PC-9 (cell line): ENCODE measurements at regions of chr5 and their contacts with region 1.

Region 1: GRCh38 chr5:32709781-32710549 is 1.2 kb upstream of the NPR3 start:
- DNase-seq: peak; percentile 45 to 82
- H3K4me3 ChIP-seq: peak overlapping the region; percentile 72
- H3K27ac ChIP-seq: no peak overlapping the region
- H3K4me1 ChIP-seq: peaks cover 19% of the 10 kb centered on the region; the same call in 1 of the 2 replicates
- H3K27me3 ChIP-seq: peaks cover 18% of the 10 kb centered on the region
- CTCF ChIP-seq: peak; percentile 80

Region 2: DNA sequence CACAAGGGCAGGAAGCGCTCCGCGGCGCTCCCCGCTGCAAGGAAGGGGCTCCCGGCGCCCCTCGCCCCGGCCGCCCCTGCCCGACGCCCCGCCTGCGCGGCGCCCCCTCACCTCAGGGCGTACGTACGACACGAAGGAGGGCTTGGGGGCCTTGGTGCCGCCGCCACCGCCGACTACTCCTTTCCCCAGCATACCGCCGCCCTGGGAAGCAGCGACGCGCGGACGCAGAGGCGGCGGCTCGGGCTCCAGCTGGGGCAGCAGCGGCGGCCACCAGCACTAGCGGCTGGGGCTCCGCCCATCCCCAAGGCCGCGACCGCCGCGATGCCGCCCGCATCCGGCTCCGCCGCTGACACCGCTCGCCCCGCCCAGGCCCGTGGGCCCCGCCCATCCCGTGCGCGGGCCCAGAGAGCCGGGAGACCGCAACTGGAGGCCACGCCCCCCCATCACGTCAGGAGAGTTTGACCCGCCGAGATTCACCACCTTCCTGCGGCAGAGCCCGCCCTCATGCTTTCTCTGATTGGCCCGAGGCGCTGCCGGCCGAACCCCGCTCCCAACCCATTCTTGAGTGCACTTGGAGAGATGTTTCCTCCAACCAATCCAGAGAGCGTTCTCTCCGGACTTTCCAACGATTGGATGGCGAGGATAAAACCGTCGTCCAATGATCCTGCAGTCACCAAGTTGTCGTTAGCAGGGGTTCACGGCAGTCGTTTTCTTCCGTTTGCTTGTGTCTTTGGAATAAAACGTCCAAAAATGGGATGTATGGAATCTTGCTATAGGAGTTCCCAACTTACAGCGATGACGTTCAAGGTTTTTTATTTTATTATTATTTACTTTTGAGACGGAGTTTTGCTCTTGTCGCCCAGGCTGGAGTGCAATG is 397.1 kb before region 1 on chr5 and contains the start of gene MTMR12:
- CTCF ChIA-PET with region 1: no interaction called
- POLR2A ChIA-PET with region 1: no interaction called
- intact Hi-C with region 1: loop called (anchors 10 kb)
- DNase-seq: peak; percentile 99 to 100
- H3K4me3 ChIP-seq: peak within 1 kb of the TSS; percentile 91
- H3K27ac ChIP-seq: peak within 1 kb of the TSS; percentile 14
- H3K4me1 ChIP-seq: peaks cover 10% of the 10 kb centered on the region
- H3K27me3 ChIP-seq: no peaks in the 10 kb centered on the region
- CTCF ChIP-seq: no peak
- total RNA-seq, gene MTMR12: 44.5 and 47.5 TPM in 2 replicates

Region 3: GRCh38 chr5:32572778-32573480 is 137.0 kb before region 1 on chr5:
- CTCF ChIA-PET with region 1: no interaction called
- POLR2A ChIA-PET with region 1: no interaction called
- intact Hi-C with region 1: no loop called
- DNase-seq: no peak
- H3K4me3 ChIP-seq: no peak overlapping the region
- H3K27ac ChIP-seq: no peak overlapping the region
- H3K4me1 ChIP-seq: no peaks in the 10 kb centered on the region
- H3K27me3 ChIP-seq: peaks cover 13% of the 10 kb centered on the region; the same call in 1 of the 2 replicates
- CTCF ChIP-seq: no peak

Region 4: DNA sequence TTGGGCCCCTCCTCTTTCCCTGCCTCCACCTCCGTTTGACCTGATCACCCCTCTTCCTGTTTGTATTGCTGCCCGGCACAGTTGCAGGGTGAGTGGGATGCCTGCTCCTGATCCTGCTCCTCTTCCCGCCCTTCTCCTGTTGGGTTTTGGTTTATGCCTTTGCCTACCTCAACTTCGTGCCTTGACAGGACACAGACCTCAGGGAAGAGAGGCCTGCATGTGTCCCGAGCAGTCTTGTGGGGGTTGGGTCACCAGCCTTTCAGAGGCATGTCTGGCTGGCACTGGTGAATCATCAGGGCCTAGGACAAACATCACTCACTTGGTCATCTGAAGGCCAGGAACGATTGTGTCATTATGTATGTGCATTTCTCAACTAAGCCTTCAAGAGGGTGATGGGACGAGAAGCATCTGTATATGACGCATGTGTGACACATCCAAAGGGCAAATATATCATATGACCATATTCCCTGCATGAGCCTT is 58.0 kb after region 1 on chr5:
- CTCF ChIA-PET with region 1: no interaction called
- POLR2A ChIA-PET with region 1: no interaction called
- intact Hi-C with region 1: loop called (anchors 1 kb)
- DNase-seq: peak; percentile 89 to 97
- H3K4me3 ChIP-seq: peak overlapping the region; percentile 6; the same call in 1 of the 2 replicates
- H3K27ac ChIP-seq: peak overlapping the region; percentile 74
- H3K4me1 ChIP-seq: peaks cover 18% of the 10 kb centered on the region
- H3K27me3 ChIP-seq: no peaks in the 10 kb centered on the region
- CTCF ChIP-seq: no peak

Region 5: GRCh38 chr5:32852535-32852934 is 142.6 kb after region 1 on chr5:
- CTCF ChIA-PET with region 1: interaction called, 24 read pairs
- POLR2A ChIA-PET with region 1: no interaction called
- intact Hi-C with region 1: loop called (anchors 1 kb)
- DNase-seq: peak in 1 of 2 experiments; percentile 91
- H3K4me3 ChIP-seq: no peak overlapping the region
- H3K27ac ChIP-seq: no peak overlapping the region
- H3K4me1 ChIP-seq: peaks cover 6% of the 10 kb centered on the region; the same call in 1 of the 2 replicates
- H3K27me3 ChIP-seq: peaks cover 10% of the 10 kb centered on the region; the same call in 1 of the 2 replicates
- CTCF ChIP-seq: peak; percentile 66

Region 6: DNA sequence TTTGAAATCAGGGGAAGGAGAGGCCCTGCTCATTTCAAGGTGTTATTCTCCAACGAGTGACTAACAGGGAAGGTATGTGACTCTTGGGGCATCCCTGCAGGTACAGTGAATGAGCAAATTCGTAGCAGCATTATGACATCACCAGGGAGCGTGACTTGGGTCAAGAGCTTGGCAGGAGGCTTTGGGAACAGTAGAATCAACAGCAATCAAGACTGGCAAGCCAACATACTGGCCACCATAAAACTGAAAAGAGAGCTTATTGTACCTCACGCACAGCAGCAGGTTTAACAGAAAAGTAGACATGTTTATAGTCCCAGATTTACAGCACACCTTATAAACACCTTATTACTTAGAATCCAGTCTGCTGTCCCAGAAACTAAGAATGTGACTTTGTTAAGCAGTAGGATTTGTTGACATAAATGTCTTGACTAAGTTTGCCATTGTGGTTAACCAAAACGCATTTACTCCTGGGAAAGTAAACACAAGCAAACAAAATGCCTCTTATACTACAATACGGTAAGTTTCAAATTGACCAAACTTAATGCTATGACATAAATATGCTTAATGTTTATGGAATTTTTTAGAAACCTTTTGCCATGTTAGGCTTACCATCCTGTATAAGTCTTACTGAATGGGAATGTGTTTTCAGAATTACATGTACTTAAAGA is 298.9 kb after region 1 on chr5:
- CTCF ChIA-PET with region 1: no interaction called
- POLR2A ChIA-PET with region 1: no interaction called
- intact Hi-C with region 1: loop called (anchors 1 kb)
- DNase-seq: peak; percentile 73 to 92
- H3K4me3 ChIP-seq: no peak overlapping the region
- H3K27ac ChIP-seq: peak overlapping the region; percentile 48
- H3K4me1 ChIP-seq: peaks cover 14% of the 10 kb centered on the region
- H3K27me3 ChIP-seq: no peaks in the 10 kb centered on the region
- CTCF ChIP-seq: no peak

Region 7: DNA sequence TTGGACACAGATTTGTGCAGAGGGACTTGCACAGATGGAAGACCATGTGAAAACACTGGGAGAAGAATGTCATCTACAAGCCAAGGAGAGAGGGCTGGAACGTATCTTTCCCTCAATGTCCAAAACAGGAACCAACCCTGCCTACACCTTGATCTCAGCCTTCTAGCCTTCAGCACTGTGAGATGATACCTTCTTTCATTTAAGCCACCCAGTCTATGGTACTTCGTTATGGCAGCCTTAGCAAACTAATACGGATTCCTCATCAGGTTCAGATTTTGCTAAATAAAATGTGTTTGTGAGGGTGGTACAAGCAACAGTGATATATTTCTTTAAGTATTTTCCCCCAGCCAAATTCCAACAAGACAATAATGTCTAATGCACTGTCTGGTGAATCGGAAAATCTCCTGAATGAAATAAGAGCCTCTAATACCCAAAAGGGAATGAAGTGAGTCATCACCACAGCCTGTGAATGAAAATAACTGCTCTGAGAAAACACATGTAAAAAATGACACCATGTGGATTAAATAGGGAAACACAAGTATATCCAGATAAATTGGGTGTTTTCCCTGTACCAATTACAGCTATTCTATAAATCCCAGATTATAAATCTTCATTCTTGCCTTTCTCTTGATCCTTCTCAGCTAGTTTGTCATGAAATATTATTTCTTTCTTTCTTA is 548.0 kb after region 1 on chr5:
- CTCF ChIA-PET with region 1: no interaction called
- POLR2A ChIA-PET with region 1: no interaction called
- intact Hi-C with region 1: loop called (anchors 5 kb)
- DNase-seq: no peak
- H3K4me3 ChIP-seq: no peak overlapping the region
- H3K27ac ChIP-seq: no peak overlapping the region
- H3K4me1 ChIP-seq: no peaks in the 10 kb centered on the region
- H3K27me3 ChIP-seq: no peaks in the 10 kb centered on the region
- CTCF ChIP-seq: no peak; the same call in 1 of the 2 replicates

Region 8: GRCh38 chr5:33423018-33423630 is 713.2 kb after region 1 on chr5:
- CTCF ChIA-PET with region 1: interaction called, 5 read pairs
- POLR2A ChIA-PET with region 1: no interaction called
- intact Hi-C with region 1: loop called (anchors 1 kb)
- DNase-seq: no peak
- H3K4me3 ChIP-seq: no peak overlapping the region
- H3K27ac ChIP-seq: no peak overlapping the region
- H3K4me1 ChIP-seq: no peaks in the 10 kb centered on the region
- H3K27me3 ChIP-seq: no peaks in the 10 kb centered on the region
- CTCF ChIP-seq: peak; percentile 84